Ovary (tissue), 10 donors: ENCODE measurements at regions of chr9 and their contacts with region 1.

Region 1: DNA sequence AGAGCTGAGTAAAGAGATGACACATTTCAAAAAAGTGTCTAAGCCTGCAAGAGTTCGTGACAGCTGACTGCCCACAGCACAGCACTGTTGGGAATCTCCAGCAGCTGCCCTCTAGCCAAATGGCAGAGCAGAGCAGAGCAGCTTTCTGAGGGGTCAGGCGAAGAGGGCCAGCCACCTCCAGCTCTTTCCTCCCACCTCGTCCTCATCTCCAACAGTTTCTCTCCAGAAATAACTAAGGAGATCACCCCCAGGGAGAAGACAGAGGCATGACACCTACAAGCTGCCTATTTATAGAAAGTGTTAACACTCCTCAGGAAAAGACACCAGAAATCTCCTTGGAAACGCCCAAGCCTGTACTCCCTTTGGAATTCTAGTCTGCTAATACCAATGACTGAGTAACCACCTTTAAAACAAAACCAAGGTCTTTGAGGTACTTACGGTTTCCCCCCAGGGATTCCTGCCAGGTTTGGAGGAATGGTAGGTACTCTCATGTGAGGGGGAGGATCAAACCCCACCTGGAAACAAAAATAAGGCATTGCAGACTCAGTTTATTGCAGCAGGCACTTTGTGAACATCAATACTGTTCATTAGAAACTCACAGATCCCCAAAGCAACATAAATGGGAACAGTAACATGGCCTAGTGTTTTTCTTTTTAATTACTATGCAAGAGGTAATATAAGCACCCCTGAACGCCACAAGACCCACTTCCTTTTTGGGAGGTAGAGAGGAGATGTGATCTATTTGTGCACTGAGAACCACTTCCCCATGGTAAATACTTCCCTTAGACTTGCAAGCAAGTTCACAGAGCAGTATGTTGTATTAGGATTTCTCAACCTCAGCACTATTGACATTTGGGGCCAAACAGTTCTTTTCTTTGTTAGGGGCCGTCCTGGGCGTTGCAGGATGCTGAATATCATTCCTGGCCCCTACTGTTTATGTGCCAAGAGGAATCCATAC is 79.3 kb downstream of the TLE1 start:
- DNase-seq: no peak
- H3K4me3 ChIP-seq: no peak overlapping the region
- H3K27ac ChIP-seq: no peak overlapping the region
- H3K4me1 ChIP-seq: no peaks in the 10 kb centered on the region
- H3K27me3 ChIP-seq: no peaks in the 10 kb centered on the region
- CTCF ChIP-seq: no peak
- EP300 ChIP-seq: no peak
- POLR2A ChIP-seq: no peak

Region 2: DNA sequence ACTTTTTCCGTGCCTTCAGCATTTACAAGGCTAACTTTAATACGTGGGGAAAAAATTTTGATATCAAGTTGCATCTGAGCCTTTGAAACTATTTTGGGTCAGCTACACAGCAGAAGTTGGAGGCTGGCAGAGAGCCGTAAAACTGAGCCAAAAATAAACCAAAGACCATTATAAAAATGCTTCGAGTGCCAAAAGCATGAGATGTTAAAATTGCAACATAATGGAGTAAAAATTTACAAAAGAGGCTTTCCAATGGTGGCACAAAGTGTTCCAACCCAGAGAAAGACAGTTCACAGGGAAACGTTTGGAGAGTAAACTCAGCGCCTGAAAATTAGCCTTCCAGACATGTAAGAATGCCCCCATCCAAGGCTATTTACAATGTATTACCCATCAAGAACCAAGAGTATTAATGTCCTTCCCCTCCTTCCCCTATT is 111.0 kb before region 1 on chr9:
- intact Hi-C with region 1: no loop called
- DNase-seq: peak in 1 of 5 donors; percentile 37
- H3K4me3 ChIP-seq: no peak overlapping the region
- H3K27ac ChIP-seq: no peak overlapping the region
- H3K4me1 ChIP-seq: peaks cover 5% of the 10 kb centered on the region
- H3K27me3 ChIP-seq: no peaks in the 10 kb centered on the region
- CTCF ChIP-seq: no peak
- EP300 ChIP-seq: no peak
- POLR2A ChIP-seq: no peak

Region 3: GRCh38 chr9:81558091-81558830 is 51.8 kb before region 1 on chr9:
- intact Hi-C with region 1: loop called in 1 of 4 experiments (anchors 10 kb)
- DNase-seq: no peak
- H3K4me3 ChIP-seq: no peak overlapping the region
- H3K27ac ChIP-seq: no peak overlapping the region
- H3K4me1 ChIP-seq: peaks cover 4% of the 10 kb centered on the region
- H3K27me3 ChIP-seq: no peaks in the 10 kb centered on the region
- CTCF ChIP-seq: no peak
- EP300 ChIP-seq: no peak
- POLR2A ChIP-seq: no peak

Region 4: GRCh38 chr9:81665322-81665871 is 55.3 kb after region 1 on chr9:
- intact Hi-C with region 1: loop called in 1 of 4 experiments (anchors 10 kb)
- DNase-seq: no peak
- H3K4me3 ChIP-seq: no peak overlapping the region
- H3K27ac ChIP-seq: no peak overlapping the region
- H3K4me1 ChIP-seq: peaks cover 15% of the 10 kb centered on the region
- H3K27me3 ChIP-seq: no peaks in the 10 kb centered on the region
- CTCF ChIP-seq: no peak
- EP300 ChIP-seq: no peak
- POLR2A ChIP-seq: no peak